HepG2 (cell line): ENCODE measurements at regions of chr18 and their contacts with region 1.

Region 1: GRCh38 chr18:35478520-35479435 is 19.0 kb downstream of the INO80C start:
- DNase-seq: peak; percentile 97
- ATAC-seq: peak; percentile 92
- H3K4me3 ChIP-seq: peak overlapping the region in 1 of 3 experiments; percentile 49; a peak in 1 of 6 replicates
- H3K27ac ChIP-seq: peak overlapping the region; percentile 85
- H3K4me1 ChIP-seq: peaks cover 71% of the 10 kb centered on the region
- H3K27me3 ChIP-seq: no peaks in the 10 kb centered on the region; a peak in 1 of 5 replicates
- CTCF ChIP-seq: no peak
- EP300 ChIP-seq: peak in 1 of 2 experiments; percentile 53; a peak in 2 of 4 replicates
- POLR2A ChIP-seq: peak; percentile 54 to 83
- RAD21 ChIP-seq: no peak

Region 2: DNA sequence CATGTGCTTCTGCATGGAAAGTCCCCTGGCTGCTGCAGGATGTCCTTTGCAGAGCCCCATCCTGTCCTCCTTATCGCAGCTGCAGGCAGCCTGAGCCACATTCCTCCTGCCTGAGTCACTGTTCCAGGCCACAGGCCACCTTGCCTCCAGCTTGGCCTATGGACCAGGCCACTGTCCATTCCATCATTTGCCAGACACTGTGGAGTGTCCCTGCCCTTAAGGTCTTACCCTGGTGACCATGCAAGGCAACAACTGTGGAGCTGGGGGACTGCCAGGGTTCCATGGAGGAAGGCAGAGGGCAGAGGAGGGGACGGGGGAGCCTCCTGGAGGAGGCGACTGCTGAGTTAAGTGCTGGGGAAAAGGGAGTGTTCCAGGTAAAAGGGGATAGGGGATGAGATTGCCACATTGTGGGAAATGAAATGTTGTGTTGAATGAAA is 19.8 kb before region 1 on chr18:
- CTCF ChIA-PET with region 1: no interaction called
- POLR2A ChIA-PET with region 1: interaction called, 11 read pairs
- in situ Hi-C with region 1: no loop called
- intact Hi-C with region 1: no loop called
- DNase-seq: peak; percentile 86
- ATAC-seq: peak; percentile 99
- H3K4me3 ChIP-seq: no peak overlapping the region
- H3K27ac ChIP-seq: no peak overlapping the region
- H3K4me1 ChIP-seq: peaks cover 35% of the 10 kb centered on the region
- H3K27me3 ChIP-seq: no peaks in the 10 kb centered on the region
- CTCF ChIP-seq: peak; percentile 28; the same call in 1 of the 2 replicates
- EP300 ChIP-seq: peak in 1 of 2 experiments; percentile 42; a peak in 2 of 4 replicates
- POLR2A ChIP-seq: no peak
- RAD21 ChIP-seq: no peak

Region 3: GRCh38 chr18:35580701-35581539 is 102.1 kb after region 1 on chr18:
- CTCF ChIA-PET with region 1: no interaction called
- POLR2A ChIA-PET with region 1: interaction called, 5 read pairs
- in situ Hi-C with region 1: no loop called
- intact Hi-C with region 1: loop called (anchors 1 kb)
- DNase-seq: peak; percentile 23
- ATAC-seq: peak; percentile 88
- H3K4me3 ChIP-seq: peak overlapping the region; percentile 66 to 79 (median 67); a peak in 5 of 6 replicates
- H3K27ac ChIP-seq: peak overlapping the region; percentile 62
- H3K4me1 ChIP-seq: peaks cover 16% of the 10 kb centered on the region
- H3K27me3 ChIP-seq: 0 out of 5 replicates have a peak, but pooled peaks cover 0 to 3% of the 10 kb centered on the region in 2 experiments
- CTCF ChIP-seq: no peak
- EP300 ChIP-seq: no peak
- POLR2A ChIP-seq: no peak
- RAD21 ChIP-seq: no peak; the same call in none of the 2 replicates